ENCODE measurements at regions of chr5 and their contacts with region 1.

Region 1: DNA sequence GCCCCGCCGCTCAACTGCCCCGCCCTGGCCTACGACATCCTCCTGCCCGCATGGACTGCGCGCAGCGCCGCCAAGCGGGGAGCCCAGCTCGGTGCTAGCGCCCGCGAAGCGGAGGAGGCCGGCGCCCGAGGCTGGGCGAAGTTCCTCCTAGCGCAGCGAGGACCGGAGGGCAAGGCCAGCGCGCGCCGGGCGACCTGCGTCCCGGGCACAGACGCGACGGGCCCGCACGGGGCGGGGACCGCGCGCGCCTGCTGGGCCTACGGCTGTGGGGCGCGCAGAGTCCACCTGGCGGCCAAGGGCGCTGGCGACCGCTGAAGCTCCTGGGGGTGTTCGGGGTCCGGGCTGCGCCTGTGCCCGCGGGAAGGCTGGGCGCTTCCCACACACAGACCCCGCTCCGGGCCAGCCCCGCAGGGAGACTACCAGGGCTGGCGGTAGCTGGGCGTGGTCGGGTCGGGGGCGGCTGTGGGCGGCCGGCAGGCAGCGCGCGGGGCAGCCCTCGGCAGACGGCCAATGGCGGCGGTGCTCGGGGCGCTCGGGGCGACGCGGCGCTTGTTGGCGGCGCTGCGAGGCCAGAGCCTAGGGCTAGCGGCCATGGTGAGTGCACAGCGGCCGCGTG is at the start of gene PCBD2:
- DNase-seq: peak; percentile 87 to 95 (median 94)
- ATAC-seq: peak; percentile 92
- H3K4me3 ChIP-seq: peak within 1 kb of the TSS; percentile 87
- H3K27ac ChIP-seq: peak within 1 kb of the TSS; percentile 92
- H3K4me1 ChIP-seq: peaks cover 2 to 25% of the 10 kb centered on the region in 2 experiments; a peak in 4 of 5 replicates
- H3K27me3 ChIP-seq: no peaks in the 10 kb centered on the region
- CTCF ChIP-seq: peak; percentile 89 to 95 (median 93)
- EP300 ChIP-seq: 0 out of 2 replicates have a peak, but pooled peaks have one; percentile 17
- POLR2A ChIP-seq: peak; percentile 68; the same call in 1 of the 2 replicates
- RAD21 ChIP-seq: peak; percentile 79 to 84
- polyA plus RNA-seq, gene PCBD2: 7.1 to 7.8 TPM

Region 2: GRCh38 chr5:134592141-134592746 is 312.5 kb before region 1 on chr5:
- CTCF ChIA-PET with region 1: no interaction called
- POLR2A ChIA-PET with region 1: no interaction called
- in situ Hi-C with region 1: no loop called
- intact Hi-C with region 1: loop called (anchors 10 kb)
- DNase-seq: peak in 1 of 4 experiments; percentile 22
- ATAC-seq: peak; percentile 41
- H3K4me3 ChIP-seq: no peak overlapping the region
- H3K27ac ChIP-seq: no peak overlapping the region
- H3K4me1 ChIP-seq: peaks cover 4% of the 10 kb centered on the region in 2 experiments; a peak in 3 of 5 replicates
- H3K27me3 ChIP-seq: no peaks in the 10 kb centered on the region
- CTCF ChIP-seq: no peak
- EP300 ChIP-seq: no peak
- POLR2A ChIP-seq: no peak
- RAD21 ChIP-seq: no peak

Region 3: DNA sequence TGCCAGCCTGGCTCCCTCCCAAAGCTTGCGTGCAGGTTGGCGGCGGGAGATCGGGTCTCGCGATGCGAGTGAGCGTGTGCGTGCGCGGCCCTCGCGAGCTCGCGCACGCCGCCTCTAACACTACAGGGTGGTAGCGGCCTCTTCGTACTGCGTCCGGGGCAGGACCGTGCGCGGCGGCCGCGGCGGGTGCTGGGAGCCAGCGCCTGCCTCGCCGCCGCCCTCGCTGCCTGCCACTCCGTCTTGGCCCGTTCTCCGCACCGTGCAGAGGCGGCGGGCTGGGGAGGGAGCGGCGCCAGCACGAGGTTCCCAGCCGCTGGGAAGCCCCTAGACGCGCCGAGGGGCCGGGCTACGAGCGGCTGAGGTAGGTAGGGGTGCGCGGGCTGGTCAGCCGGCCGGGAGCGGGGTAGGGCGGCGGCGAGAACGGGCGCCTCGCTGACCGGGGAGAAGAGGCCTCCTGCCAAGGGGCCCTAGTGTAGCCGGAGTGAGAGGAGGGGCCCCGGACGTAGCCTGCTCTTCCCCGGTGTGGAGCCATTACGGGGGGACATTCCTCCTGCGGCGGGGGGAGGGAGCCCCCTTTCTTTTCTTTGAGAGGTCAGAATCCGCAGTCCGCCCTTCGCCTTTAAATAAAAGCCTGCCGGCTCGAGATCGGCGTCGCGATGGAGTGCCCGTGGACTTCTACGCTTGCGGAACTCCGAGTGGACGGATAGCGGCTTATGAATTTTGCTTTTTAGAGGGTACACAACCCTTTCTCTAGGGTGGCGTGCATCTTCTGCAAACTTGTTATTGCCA is 58.7 kb before region 1 on chr5 and contains the start of gene C5orf24:
- CTCF ChIA-PET with region 1: interaction called, 3 read pairs
- POLR2A ChIA-PET with region 1: interaction called, 4 read pairs
- in situ Hi-C with region 1: no loop called
- intact Hi-C with region 1: loop called (anchors 2 kb)
- DNase-seq: peak; percentile 90 to 97 (median 91)
- ATAC-seq: peak; percentile 93
- H3K4me3 ChIP-seq: peak within 1 kb of the TSS; percentile 93
- H3K27ac ChIP-seq: peak within 1 kb of the TSS; percentile 96
- H3K4me1 ChIP-seq: peaks cover 16 to 34% of the 10 kb centered on the region in 2 experiments; a peak in 4 of 5 replicates
- H3K27me3 ChIP-seq: no peaks in the 10 kb centered on the region
- CTCF ChIP-seq: no peak
- EP300 ChIP-seq: no peak
- POLR2A ChIP-seq: peak; percentile 95
- RAD21 ChIP-seq: no peak
- polyA plus RNA-seq, gene C5orf24: 8.9 to 10.6 TPM

Region 4: GRCh38 chr5:134887593-134888159 is 17.1 kb before region 1 on chr5:
- CTCF ChIA-PET with region 1: no interaction called
- POLR2A ChIA-PET with region 1: interaction called, 10 read pairs
- in situ Hi-C with region 1: no loop called
- intact Hi-C with region 1: no loop called
- DNase-seq: peak in 1 of 4 experiments; percentile 11
- ATAC-seq: peak; percentile 80
- H3K4me3 ChIP-seq: no peak overlapping the region
- H3K27ac ChIP-seq: no peak overlapping the region
- H3K4me1 ChIP-seq: no peaks in the 10 kb centered on the region
- H3K27me3 ChIP-seq: peaks cover 0 to 7% of the 10 kb centered on the region in 2 experiments; a peak in 2 of 5 replicates
- CTCF ChIP-seq: no peak
- EP300 ChIP-seq: no peak
- POLR2A ChIP-seq: no peak
- RAD21 ChIP-seq: no peak

Region 5: DNA sequence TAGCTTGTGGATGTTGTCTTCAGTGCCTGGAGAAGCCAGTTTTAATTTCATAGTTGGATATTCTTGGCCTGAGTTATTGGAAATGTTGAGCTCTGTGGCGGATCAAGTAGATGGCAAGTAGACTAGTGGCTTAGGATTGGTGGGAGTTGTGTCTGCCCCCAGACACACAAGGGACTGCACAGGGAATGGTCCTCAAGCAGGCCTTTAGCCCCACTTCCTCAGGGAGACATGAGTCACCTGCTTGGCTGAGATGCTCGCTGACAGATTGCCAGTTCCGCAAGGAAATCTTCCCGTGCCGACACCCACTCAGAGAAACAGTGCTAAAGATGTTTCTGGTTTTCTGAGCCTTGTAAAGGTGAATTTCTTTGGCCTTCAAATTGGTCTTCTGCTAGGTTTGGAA is 44.2 kb after region 1 on chr5:
- CTCF ChIA-PET with region 1: no interaction called
- POLR2A ChIA-PET with region 1: no interaction called
- in situ Hi-C with region 1: no loop called
- intact Hi-C with region 1: no loop called
- DNase-seq: peak in 1 of 4 experiments; percentile 11
- ATAC-seq: no peak; the same call in 2 of the 3 replicates
- H3K4me3 ChIP-seq: no peak overlapping the region
- H3K27ac ChIP-seq: no peak overlapping the region
- H3K4me1 ChIP-seq: no peaks in the 10 kb centered on the region
- H3K27me3 ChIP-seq: no peaks in the 10 kb centered on the region
- CTCF ChIP-seq: no peak
- EP300 ChIP-seq: no peak
- POLR2A ChIP-seq: no peak
- RAD21 ChIP-seq: no peak

Region 6: GRCh38 chr5:135203593-135204036 is 298.9 kb after region 1 on chr5:
- CTCF ChIA-PET with region 1: no interaction called
- POLR2A ChIA-PET with region 1: no interaction called
- in situ Hi-C with region 1: no loop called
- intact Hi-C with region 1: loop called (anchors 5 kb)
- DNase-seq: peak; percentile 35 to 69 (median 48)
- ATAC-seq: peak; percentile 80
- H3K4me3 ChIP-seq: no peak overlapping the region
- H3K27ac ChIP-seq: no peak overlapping the region
- H3K4me1 ChIP-seq: peaks cover 0 to 17% of the 10 kb centered on the region in 2 experiments; a peak in 2 of 5 replicates
- H3K27me3 ChIP-seq: no peaks in the 10 kb centered on the region
- CTCF ChIP-seq: peak; percentile 50 to 66 (median 58); a peak in 4 of 6 replicates
- EP300 ChIP-seq: no peak
- POLR2A ChIP-seq: no peak
- RAD21 ChIP-seq: peak; percentile 33 to 85; a peak in 3 of 4 replicates